Adrenal gland (tissue), 19 donors: ENCODE measurements at regions of chr3 and their contacts with region 1.

Region 1: DNA sequence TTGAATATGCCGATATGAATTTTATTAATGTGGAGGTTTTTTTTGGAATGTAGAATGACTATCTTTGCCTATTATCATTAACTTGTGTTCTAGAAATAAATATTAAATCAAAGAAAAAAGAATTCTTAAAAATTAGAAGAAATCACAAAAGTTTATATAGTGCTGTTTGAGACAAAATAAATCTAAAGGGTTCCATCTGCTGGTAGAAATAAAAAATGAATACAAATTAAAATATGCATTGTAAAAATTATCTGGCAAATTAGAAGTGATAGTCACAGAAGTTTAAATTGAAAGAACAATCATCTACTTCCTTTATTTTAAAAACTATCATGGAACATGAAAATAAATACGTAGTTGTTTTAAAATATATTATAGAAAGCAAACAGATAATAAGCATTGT is 22.7 kb upstream of the ZBTB20 start:
- DNase-seq: no peak
- H3K4me3 ChIP-seq: no peak overlapping the region
- H3K27ac ChIP-seq: no peak overlapping the region
- H3K4me1 ChIP-seq: no peaks in the 10 kb centered on the region
- H3K27me3 ChIP-seq: no peaks in the 10 kb centered on the region
- CTCF ChIP-seq: peak; percentile 21 to 70 (median 44)
- POLR2A ChIP-seq: no peak

Region 2: DNA sequence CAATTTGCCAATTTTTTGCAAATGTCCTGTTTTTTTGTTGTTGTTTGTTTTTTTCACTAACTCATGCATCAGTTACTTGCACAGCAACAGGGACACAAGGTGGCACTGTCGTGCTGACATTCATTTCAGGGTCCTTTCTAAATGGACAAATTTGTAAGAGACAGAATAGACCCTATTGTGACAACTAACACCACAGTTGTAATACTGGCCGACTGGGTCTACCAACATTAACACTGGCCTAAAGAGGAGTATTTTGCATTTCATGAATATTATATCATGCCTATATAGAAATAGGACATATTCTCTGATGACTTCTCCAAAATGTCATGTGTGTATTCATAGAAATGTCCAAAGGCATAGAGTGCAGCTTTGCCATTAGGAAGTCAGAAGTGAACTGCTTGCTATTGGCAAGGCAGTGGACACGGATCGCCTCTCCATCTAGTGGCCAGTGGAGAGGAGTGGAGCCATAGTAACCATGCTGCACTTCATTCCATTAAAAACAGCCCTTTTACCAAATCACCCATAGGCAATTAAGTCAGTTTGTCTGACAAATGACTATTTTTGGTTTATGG is 77.5 kb before region 1 on chr3:
- intact Hi-C with region 1: loop called in 1 of 2 experiments (anchors 10 kb)
- DNase-seq: peak; percentile 66 to 89 (median 79)
- H3K4me3 ChIP-seq: no peak overlapping the region
- H3K27ac ChIP-seq: peak overlapping the region in 2 of 5 donors; percentile 23 to 41
- H3K4me1 ChIP-seq: peaks cover 0 to 60% of the 10 kb centered on the region in 2 donors
- H3K27me3 ChIP-seq: no peaks in the 10 kb centered on the region
- CTCF ChIP-seq: peak; percentile 54 to 83 (median 78)
- POLR2A ChIP-seq: no peak